Transverse colon (tissue), 4 donors: ENCODE measurements at regions of chr1 and their contacts with region 1.

Region 1: GRCh38 chr1:172719694-172720138 is 60.8 kb downstream of the FASLG start:
- DNase-seq: no peak
- H3K4me3 ChIP-seq: no peak overlapping the region
- H3K27ac ChIP-seq: no peak overlapping the region
- H3K4me1 ChIP-seq: no peaks in the 10 kb centered on the region
- H3K27me3 ChIP-seq: no peaks in the 10 kb centered on the region
- CTCF ChIP-seq: peak; percentile 57 to 75 (median 68)
- EP300 ChIP-seq: no peak
- POLR2A ChIP-seq: no peak

Region 2: DNA sequence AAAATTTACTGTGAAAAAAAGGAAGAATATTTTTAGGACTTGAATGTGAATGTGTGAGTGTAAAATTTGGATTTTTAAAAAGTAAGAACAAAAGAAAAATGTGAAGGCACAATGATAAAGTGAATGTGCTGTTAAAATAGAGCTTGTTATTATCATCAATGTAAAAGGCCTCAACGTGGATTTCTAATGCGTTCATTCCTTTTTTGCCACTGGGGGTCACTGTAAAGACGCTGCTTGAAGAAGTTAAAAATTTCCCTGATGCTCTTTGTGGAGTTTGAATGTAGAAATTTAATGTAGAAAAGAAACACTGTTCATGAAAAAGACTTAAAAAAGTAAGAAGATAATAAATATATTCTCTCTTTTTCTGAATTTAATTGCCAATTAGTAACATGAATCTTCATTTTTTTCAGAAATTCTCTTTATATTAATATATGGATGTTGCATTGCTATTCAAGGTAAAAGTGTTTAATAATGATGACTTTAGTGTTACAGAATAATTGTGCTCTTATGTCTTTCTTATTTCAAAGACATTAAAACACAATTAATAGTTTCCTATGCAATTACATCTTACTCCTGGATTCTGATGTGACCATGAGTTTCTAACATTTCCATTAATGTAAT is 716.9 kb before region 1 on chr1:
- in situ Hi-C with region 1: loop called in 1 of 4 experiments (anchors 25 kb)
- intact Hi-C with region 1: no loop called
- DNase-seq: peak; percentile 14
- H3K4me3 ChIP-seq: no peak overlapping the region
- H3K27ac ChIP-seq: no peak overlapping the region
- H3K4me1 ChIP-seq: peaks cover 0 to 4% (median 0%) of the 10 kb centered on the region in 4 donors
- H3K27me3 ChIP-seq: no peaks in the 10 kb centered on the region
- CTCF ChIP-seq: peak; percentile 53 to 62 (median 58)
- EP300 ChIP-seq: no peak
- POLR2A ChIP-seq: no peak

Region 3: DNA sequence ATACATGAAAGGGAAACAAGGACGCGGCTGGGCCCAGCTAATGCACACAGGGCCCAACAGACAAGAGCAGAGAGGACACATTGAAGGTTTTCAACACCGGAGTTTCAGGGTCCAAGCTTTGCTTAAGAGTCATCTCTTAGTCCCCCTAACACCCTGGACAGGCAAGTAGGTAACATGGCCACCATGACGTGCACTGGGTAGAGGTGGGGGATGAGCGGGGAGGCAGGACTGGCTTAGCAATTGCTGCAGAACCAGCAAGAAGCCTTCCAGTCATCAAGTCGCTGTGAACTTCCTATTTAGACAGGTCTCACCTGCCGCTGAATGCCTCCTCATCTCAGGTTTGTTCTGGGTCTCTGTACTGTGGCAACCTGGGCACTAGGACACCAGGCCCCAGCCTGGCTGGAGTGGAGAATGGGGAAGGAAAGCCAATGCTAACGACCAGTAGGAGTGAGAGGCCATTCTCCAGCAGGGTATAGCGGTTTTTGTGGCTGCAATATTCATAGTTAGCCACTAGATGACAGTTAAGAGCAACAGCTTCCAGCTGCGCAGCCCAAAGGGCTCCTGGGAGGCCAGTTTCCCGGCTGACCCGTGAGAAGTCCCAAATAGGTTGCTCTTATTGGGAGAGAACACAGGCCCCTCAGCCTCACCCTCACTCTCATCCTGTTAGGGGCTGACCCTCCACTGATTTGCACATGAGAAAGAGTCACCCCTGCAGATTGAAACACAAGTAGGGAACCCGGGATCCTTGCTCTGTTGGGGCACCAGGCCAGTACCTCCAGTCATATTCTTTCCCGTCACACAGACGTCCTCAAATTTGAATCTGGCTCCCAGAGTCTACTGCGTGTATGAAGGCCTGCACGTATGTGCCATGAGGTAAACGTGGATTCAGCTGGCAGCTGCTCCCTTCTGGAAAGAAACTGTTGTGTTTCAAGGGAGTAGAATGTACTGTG is 269.9 kb before region 1 on chr1:
- in situ Hi-C with region 1: loop called (anchors 25 kb)
- intact Hi-C with region 1: no loop called
- DNase-seq: peak; percentile 58
- H3K4me3 ChIP-seq: peak overlapping the region in 2 of 4 donors; percentile 12 to 24
- H3K27ac ChIP-seq: peak overlapping the region in 3 of 4 donors; percentile 10 to 41 (median 38)
- H3K4me1 ChIP-seq: peaks cover 0 to 23% (median 6%) of the 10 kb centered on the region in 4 donors
- H3K27me3 ChIP-seq: no peaks in the 10 kb centered on the region
- CTCF ChIP-seq: peak; percentile 85 to 93 (median 91)
- EP300 ChIP-seq: no peak
- POLR2A ChIP-seq: no peak

Region 4: GRCh38 chr1:172613294-172613693 is 106.4 kb before region 1 on chr1:
- in situ Hi-C with region 1: loop called in 1 of 4 experiments (anchors 10 kb)
- intact Hi-C with region 1: no loop called
- DNase-seq: no peak
- H3K4me3 ChIP-seq: no peak overlapping the region
- H3K27ac ChIP-seq: no peak overlapping the region
- H3K4me1 ChIP-seq: no peaks in the 10 kb centered on the region
- H3K27me3 ChIP-seq: no peaks in the 10 kb centered on the region
- CTCF ChIP-seq: no peak
- EP300 ChIP-seq: no peak
- POLR2A ChIP-seq: no peak

Region 5: DNA sequence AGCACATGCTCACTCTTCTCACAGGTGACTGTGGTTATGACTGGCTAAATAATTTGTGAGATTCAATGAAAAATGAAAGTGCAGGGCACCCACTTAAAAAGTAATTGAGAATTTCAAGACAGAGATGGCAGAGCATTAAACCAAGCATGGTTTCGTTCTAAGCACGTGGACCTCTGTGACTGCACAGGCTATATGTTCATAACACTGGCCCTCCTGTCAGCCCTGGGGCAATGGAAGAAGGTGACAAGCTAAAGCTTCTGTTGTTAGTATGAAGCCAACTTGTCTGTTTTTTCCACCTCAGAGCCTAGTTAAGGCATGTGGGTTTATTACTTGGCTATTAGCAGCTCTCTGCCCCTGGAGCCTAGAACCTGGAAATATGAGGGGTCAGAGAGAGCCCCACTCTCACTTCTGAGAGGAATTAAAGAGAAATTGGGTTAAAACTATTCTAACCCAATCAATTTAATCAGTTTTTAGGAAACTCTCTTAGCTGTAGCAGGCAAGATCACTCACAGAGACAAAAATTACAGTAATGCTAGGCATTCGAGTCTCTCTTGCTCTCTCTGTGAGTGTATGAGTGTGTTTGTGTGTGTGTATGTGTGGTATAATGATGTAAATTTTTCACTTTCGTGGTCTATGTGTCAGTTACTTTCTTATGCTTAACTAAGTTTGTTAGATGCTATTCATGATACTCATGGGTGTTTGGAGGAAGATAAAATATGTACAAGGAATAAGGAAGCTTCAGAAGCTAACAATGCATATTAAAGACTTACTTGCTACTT is 70.3 kb after region 1 on chr1:
- in situ Hi-C with region 1: no loop called
- intact Hi-C with region 1: no loop called
- DNase-seq: no peak
- H3K4me3 ChIP-seq: no peak overlapping the region
- H3K27ac ChIP-seq: no peak overlapping the region
- H3K4me1 ChIP-seq: no peaks in the 10 kb centered on the region
- H3K27me3 ChIP-seq: no peaks in the 10 kb centered on the region
- CTCF ChIP-seq: no peak
- EP300 ChIP-seq: no peak
- POLR2A ChIP-seq: no peak